ENCODE measurements at regions of chr5 and their contacts with region 1.

Region 1: DNA sequence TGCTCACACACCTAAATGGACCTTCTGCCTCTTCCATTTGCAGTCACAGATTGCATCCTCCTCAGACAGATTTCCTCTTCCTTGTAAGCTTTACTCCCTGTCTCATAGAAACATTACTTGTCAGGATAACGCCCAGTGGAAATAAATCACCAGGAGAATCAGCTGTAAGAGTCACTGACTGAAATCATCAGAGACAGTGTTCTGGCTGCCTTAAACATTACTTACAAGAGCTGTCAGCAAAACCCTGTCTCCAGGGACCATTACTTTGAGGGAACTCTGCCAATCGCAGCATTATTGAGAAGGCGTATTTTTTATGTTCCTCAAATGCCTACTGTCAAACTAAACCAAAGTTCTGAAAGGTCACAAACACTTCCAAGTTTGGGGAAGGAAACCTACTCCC is 5.9 kb downstream of the DPYSL3 start:
- DNase-seq: peak in 4 of 5 donors; percentile 29 to 46 (median 40)
- ATAC-seq: peak in 3 of 4 donors; percentile 65 to 83 (median 78)
- H3K4me3 ChIP-seq: peak overlapping the region in 1 of 12 donors; percentile 5
- H3K27ac ChIP-seq: peak overlapping the region in 11 of 12 donors; percentile 34 to 91 (median 64)
- H3K4me1 ChIP-seq: peaks cover 0 to 34% (median 13%) of the 10 kb centered on the region in 12 donors
- H3K27me3 ChIP-seq: peaks cover 0 to 6% (median 0%) of the 10 kb centered on the region in 9 donors
- CTCF ChIP-seq: no peak
- POLR2A ChIP-seq: no peak

Region 2: DNA sequence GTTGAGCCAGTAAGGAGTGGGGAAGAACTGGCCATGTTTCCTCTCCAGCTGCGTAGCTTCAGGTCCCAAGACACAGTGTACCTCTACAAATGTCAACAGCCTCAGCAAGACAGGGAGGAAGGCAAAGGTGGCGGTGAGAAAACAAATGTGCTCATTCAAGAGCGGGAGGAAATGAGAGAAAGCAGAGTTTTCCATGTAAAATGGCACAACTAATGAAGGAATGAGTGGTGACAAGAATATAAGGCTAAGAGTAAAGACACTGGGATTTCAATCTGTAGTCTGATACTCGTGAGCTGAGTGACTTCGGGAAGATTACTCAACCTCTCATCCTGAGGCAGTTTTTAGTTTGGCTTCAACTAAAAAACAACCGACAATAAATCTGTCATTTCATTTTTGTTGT is 61.8 kb before region 1 on chr5:
- intact Hi-C with region 1: no loop called
- DNase-seq: no peak
- ATAC-seq: no peak
- H3K4me3 ChIP-seq: no peak overlapping the region
- H3K27ac ChIP-seq: peak overlapping the region in 1 of 12 donors; percentile 89
- H3K4me1 ChIP-seq: peaks cover 0 to 64% (median 8%) of the 10 kb centered on the region in 12 donors
- H3K27me3 ChIP-seq: no peaks in the 10 kb centered on the region
- CTCF ChIP-seq: no peak
- POLR2A ChIP-seq: no peak

Region 3: DNA sequence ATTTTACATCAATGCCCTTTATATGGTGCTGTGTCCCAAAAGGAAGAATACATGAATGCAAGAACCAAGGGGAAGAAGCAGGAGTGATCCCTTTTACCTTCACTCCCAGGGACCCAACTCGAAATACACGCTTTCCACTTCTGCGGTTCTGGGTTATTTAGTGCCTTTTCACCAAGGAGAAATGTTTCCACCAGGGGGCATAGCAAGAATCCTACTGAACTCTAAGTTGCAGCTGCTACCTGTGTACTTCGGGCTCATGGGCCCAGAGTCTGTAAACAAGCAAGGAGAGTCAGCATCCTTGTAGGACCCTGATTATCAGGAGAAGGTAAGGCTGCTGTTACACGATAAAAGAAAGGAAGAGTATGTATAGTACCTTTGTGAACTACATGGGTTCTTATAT is 39.8 kb before region 1 on chr5:
- intact Hi-C with region 1: loop called in 4 of 10 experiments (anchors 5 to 10 kb)
- DNase-seq: no peak
- ATAC-seq: peak in 2 of 4 donors; percentile 27 to 30
- H3K4me3 ChIP-seq: no peak overlapping the region
- H3K27ac ChIP-seq: no peak overlapping the region
- H3K4me1 ChIP-seq: peaks cover 0 to 33% (median 11%) of the 10 kb centered on the region in 12 donors
- H3K27me3 ChIP-seq: no peaks in the 10 kb centered on the region
- CTCF ChIP-seq: peak in 11 of 12 donors; percentile 30 to 66 (median 42)
- POLR2A ChIP-seq: no peak

Region 4: GRCh38 chr5:147699496-147700088 is 195.6 kb after region 1 on chr5:
- intact Hi-C with region 1: no loop called
- DNase-seq: no peak
- ATAC-seq: no peak
- H3K4me3 ChIP-seq: no peak overlapping the region
- H3K27ac ChIP-seq: no peak overlapping the region
- H3K4me1 ChIP-seq: no peaks in the 10 kb centered on the region
- H3K27me3 ChIP-seq: peaks cover 0 to 3% (median 0%) of the 10 kb centered on the region in 9 donors
- CTCF ChIP-seq: no peak
- POLR2A ChIP-seq: no peak

Measured in heart left ventricle (tissue), 16 donors.